Heart left ventricle (tissue), 16 donors: ENCODE measurements at regions of chr11 and their contacts with region 1.

Region 1: GRCh38 chr11:122505304-122506006 is 150.1 kb upstream of the UBASH3B start:
- DNase-seq: peak; percentile 79 to 82 (median 80)
- ATAC-seq: peak; percentile 91 to 99 (median 98)
- H3K4me3 ChIP-seq: no peak overlapping the region
- H3K27ac ChIP-seq: no peak overlapping the region
- H3K4me1 ChIP-seq: peaks cover 0 to 11% (median 4%) of the 10 kb centered on the region in 12 donors
- H3K27me3 ChIP-seq: no peaks in the 10 kb centered on the region
- CTCF ChIP-seq: peak; percentile 73 to 93 (median 87)
- POLR2A ChIP-seq: no peak

Region 2: GRCh38 chr11:121318848-121319834 is 1186.3 kb before region 1 on chr11:
- intact Hi-C with region 1: loop called in 1 of 10 experiments (anchors 10 kb)
- DNase-seq: peak in 1 of 5 donors; percentile 10
- ATAC-seq: peak in 3 of 4 donors; percentile 66 to 78 (median 74)
- H3K4me3 ChIP-seq: no peak overlapping the region
- H3K27ac ChIP-seq: no peak overlapping the region
- H3K4me1 ChIP-seq: peaks cover 0 to 5% (median 0%) of the 10 kb centered on the region in 12 donors
- H3K27me3 ChIP-seq: peaks cover 0 to 8% (median 0%) of the 10 kb centered on the region in 9 donors
- CTCF ChIP-seq: peak; percentile 45 to 75 (median 66)
- POLR2A ChIP-seq: no peak

Region 3: GRCh38 chr11:122038543-122038942 is 466.9 kb before region 1 on chr11:
- intact Hi-C with region 1: loop called in 1 of 10 experiments (anchors 10 kb)
- DNase-seq: no peak
- ATAC-seq: peak in 1 of 4 donors; percentile 36
- H3K4me3 ChIP-seq: no peak overlapping the region
- H3K27ac ChIP-seq: no peak overlapping the region
- H3K4me1 ChIP-seq: peaks cover 0 to 23% (median 11%) of the 10 kb centered on the region in 12 donors
- H3K27me3 ChIP-seq: no peaks in the 10 kb centered on the region
- CTCF ChIP-seq: no peak
- POLR2A ChIP-seq: no peak

Region 4: DNA sequence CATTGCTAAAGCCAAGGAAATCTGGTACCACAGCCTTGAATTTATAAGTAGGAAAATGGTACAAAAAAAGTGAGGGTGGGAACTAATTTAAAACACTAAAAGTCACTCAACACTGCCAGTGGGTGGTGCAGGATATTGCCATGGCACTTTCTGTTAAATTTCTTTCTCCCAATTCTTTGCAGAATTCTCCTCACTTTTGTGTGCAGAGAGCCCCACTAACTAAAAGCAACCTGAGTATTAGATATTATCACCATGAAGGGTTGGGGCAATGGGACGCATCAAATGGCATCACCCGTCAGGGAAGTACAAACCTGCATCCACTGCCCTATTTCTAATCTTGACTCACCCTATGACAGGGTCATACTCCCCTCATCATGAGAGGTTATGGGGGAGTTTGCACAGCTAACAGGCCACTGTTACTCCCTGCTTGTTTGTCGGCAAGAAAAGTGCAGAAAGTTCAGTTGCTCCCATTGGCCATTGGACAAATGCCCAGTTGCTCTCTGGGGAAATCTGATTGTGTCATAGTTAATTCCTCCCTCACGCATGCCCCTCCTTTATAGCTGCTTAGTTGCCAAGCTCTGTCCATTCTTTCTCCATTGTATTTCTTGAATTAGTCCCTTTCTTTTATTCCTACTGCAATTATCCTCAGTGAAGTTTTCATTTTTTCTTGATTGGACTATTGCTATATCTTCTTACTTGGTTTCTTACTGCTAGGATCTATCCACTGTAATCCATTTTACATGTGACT is 295.7 kb before region 1 on chr11:
- intact Hi-C with region 1: loop called in 3 of 10 experiments (anchors 2 to 5 kb)
- DNase-seq: peak in 4 of 5 donors; percentile 72 to 82 (median 79)
- ATAC-seq: peak; percentile 53 to 79 (median 69)
- H3K4me3 ChIP-seq: no peak overlapping the region
- H3K27ac ChIP-seq: peak overlapping the region in 10 of 12 donors; percentile 9 to 62 (median 32)
- H3K4me1 ChIP-seq: peaks cover 0 to 55% (median 34%) of the 10 kb centered on the region in 12 donors
- H3K27me3 ChIP-seq: no peaks in the 10 kb centered on the region
- CTCF ChIP-seq: no peak
- POLR2A ChIP-seq: no peak

Region 5: GRCh38 chr11:122293296-122294023 is 212.0 kb before region 1 on chr11:
- intact Hi-C with region 1: loop called (anchors 2 to 5 kb)
- DNase-seq: no peak
- ATAC-seq: peak in 3 of 4 donors; percentile 51 to 69 (median 61)
- H3K4me3 ChIP-seq: no peak overlapping the region
- H3K27ac ChIP-seq: peak overlapping the region in 2 of 12 donors; percentile 12 to 13
- H3K4me1 ChIP-seq: peaks cover 0 to 4% (median 0%) of the 10 kb centered on the region in 12 donors
- H3K27me3 ChIP-seq: no peaks in the 10 kb centered on the region
- CTCF ChIP-seq: peak in 10 of 12 donors; percentile 29 to 60 (median 42)
- POLR2A ChIP-seq: no peak

Region 6: DNA sequence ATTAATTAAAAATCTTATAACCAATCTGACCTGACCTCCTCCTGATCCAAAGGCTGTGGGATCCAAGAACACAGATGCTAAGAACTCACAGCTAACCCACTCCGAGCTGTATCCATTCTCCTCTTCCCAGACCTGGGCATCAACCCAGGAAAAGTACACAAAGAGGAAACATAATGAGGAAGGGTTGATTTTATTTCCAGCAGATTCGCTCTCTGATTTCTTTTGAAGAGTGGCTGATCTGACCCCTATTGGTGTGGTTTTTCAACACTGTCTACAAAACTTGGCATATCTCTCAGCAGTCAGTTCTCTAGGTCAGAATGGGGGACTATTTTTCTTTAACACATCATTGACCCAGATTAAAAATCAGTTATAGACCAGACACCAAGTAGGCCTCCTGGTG is 51.9 kb before region 1 on chr11:
- intact Hi-C with region 1: no loop called
- DNase-seq: no peak
- ATAC-seq: no peak
- H3K4me3 ChIP-seq: no peak overlapping the region
- H3K27ac ChIP-seq: no peak overlapping the region
- H3K4me1 ChIP-seq: no peaks in the 10 kb centered on the region
- H3K27me3 ChIP-seq: no peaks in the 10 kb centered on the region
- CTCF ChIP-seq: no peak
- POLR2A ChIP-seq: no peak